Transverse colon (tissue), 4 donors: ENCODE measurements at regions of chr3 and their contacts with region 1.

Region 1: GRCh38 chr3:125374996-125375941 is at the start of gene ZNF148:
- DNase-seq: peak; percentile 92
- H3K4me3 ChIP-seq: peak within 1 kb of the TSS; percentile 59 to 91 (median 87)
- H3K27ac ChIP-seq: peak within 1 kb of the TSS; percentile 92 to 93 (median 93)
- H3K4me1 ChIP-seq: peaks cover 11 to 20% (median 19%) of the 10 kb centered on the region in 4 donors
- H3K27me3 ChIP-seq: no peaks in the 10 kb centered on the region
- CTCF ChIP-seq: no peak
- EP300 ChIP-seq: no peak
- POLR2A ChIP-seq: peak; percentile 89
- total RNA-seq, gene ZNF148: 23.6 to 30.3 (median 27.6) TPM

Region 2: GRCh38 chr3:124995460-124995994 is 379.7 kb before region 1 on chr3:
- in situ Hi-C with region 1: no loop called
- intact Hi-C with region 1: loop called (anchors 10 kb)
- DNase-seq: peak; percentile 65
- H3K4me3 ChIP-seq: no peak overlapping the region
- H3K27ac ChIP-seq: peak overlapping the region; percentile 8 to 54 (median 32)
- H3K4me1 ChIP-seq: peaks cover 0 to 35% (median 8%) of the 10 kb centered on the region in 4 donors
- H3K27me3 ChIP-seq: no peaks in the 10 kb centered on the region
- CTCF ChIP-seq: peak; percentile 66 to 77 (median 67)
- EP300 ChIP-seq: no peak
- POLR2A ChIP-seq: no peak

Region 3: GRCh38 chr3:125141596-125142419 is 233.5 kb before region 1 on chr3:
- in situ Hi-C with region 1: no loop called
- intact Hi-C with region 1: no loop called
- DNase-seq: peak; percentile 74
- H3K4me3 ChIP-seq: peak overlapping the region; percentile 20 to 41 (median 26)
- H3K27ac ChIP-seq: peak overlapping the region; percentile 47 to 64 (median 52)
- H3K4me1 ChIP-seq: peaks cover 6 to 26% (median 12%) of the 10 kb centered on the region in 4 donors
- H3K27me3 ChIP-seq: no peaks in the 10 kb centered on the region
- CTCF ChIP-seq: peak in 4 of 5 experiments; percentile 10 to 38 (median 16)
- EP300 ChIP-seq: no peak
- POLR2A ChIP-seq: no peak

Region 4: DNA sequence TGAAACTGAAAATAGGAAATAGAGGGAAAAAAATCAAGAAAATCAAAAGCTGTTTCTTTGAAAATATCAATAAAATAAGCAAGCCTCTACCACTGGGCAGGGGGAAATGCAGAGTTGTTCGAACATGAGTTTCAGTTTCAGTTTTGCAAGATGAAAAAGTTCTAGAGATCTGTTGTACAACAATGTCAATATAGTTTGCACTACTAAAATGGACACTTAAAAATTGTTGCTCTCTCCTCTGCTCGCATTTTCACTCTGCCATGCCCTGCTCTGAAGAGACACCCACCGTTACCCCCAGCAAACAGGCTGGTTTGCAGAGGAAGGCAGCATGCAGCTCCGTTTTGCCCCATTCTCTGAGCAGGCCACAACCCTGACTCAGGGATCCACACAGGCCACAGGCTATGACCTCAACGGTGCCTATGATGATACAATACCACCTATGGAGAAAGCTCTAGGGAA is 64.6 kb before region 1 on chr3:
- in situ Hi-C with region 1: no loop called
- intact Hi-C with region 1: loop called (anchors 2 kb)
- DNase-seq: peak; percentile 13
- H3K4me3 ChIP-seq: peak overlapping the region in 1 of 4 donors; percentile 19
- H3K27ac ChIP-seq: peak overlapping the region; percentile 28 to 45 (median 38)
- H3K4me1 ChIP-seq: peaks cover 0 to 9% (median 4%) of the 10 kb centered on the region in 4 donors
- H3K27me3 ChIP-seq: no peaks in the 10 kb centered on the region
- CTCF ChIP-seq: no peak
- EP300 ChIP-seq: no peak
- POLR2A ChIP-seq: no peak